ENCODE measurements at regions of chr10 and their contacts with region 1.

Region 1: DNA sequence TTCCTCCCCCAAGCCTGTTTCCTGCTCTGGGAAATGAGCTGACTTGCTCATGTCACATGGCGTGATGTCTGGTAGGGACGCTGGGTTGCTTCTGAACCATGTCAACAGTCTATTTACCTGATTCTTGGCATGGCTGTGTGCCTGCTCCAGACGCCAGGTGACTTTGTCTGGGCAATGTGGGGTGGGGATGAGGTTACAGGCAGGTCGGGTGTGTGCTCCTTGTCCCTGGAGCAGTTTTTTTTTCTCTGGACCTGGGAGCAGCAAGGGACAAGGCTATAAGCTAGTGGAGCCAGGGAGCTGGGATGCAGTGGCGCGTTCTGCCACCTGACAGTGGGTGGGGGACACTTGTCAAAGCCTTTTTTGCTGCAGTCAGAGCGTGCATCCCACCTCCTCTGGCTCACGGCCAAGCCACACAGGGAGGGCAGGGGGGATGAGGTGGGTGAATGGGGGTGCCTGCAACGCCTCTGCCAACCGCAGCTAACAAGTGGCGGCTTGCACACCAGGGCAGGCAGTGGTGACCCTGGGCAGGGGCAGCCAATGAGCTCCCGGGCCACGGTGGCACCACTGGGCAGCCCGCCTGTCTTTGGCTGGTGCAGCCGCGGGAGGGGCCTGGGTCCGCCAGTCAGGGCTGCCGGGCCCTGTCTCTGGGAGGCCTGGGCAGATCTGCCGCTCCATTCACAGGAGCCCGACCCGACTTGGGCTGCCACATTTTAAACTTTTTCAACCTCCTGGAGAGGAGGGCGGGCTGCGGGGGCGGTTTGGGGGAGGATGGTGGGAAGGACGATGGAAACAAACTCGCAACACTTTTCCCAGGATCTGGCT is 22.9 kb downstream of the DNAJB12 start:
- DNase-seq: peak; percentile 98
- H3K4me3 Mint-ChIP-seq: peak overlapping the region; percentile 76
- H3K27ac Mint-ChIP-seq: peak overlapping the region; percentile 100
- H3K4me1 Mint-ChIP-seq: peaks cover 87% of the 10 kb centered on the region
- H3K27me3 Mint-ChIP-seq: peaks cover 2% of the 10 kb centered on the region

Region 2: GRCh38 chr10:70906953-70907636 is 1424.7 kb before region 1 on chr10:
- CTCF ChIA-PET with region 1: no interaction called
- intact Hi-C with region 1: no loop called
- DNase-seq: no peak
- H3K4me3 Mint-ChIP-seq: no peak overlapping the region
- H3K27ac Mint-ChIP-seq: no peak overlapping the region
- H3K4me1 Mint-ChIP-seq: no peaks in the 10 kb centered on the region
- H3K27me3 Mint-ChIP-seq: no peaks in the 10 kb centered on the region

Region 3: DNA sequence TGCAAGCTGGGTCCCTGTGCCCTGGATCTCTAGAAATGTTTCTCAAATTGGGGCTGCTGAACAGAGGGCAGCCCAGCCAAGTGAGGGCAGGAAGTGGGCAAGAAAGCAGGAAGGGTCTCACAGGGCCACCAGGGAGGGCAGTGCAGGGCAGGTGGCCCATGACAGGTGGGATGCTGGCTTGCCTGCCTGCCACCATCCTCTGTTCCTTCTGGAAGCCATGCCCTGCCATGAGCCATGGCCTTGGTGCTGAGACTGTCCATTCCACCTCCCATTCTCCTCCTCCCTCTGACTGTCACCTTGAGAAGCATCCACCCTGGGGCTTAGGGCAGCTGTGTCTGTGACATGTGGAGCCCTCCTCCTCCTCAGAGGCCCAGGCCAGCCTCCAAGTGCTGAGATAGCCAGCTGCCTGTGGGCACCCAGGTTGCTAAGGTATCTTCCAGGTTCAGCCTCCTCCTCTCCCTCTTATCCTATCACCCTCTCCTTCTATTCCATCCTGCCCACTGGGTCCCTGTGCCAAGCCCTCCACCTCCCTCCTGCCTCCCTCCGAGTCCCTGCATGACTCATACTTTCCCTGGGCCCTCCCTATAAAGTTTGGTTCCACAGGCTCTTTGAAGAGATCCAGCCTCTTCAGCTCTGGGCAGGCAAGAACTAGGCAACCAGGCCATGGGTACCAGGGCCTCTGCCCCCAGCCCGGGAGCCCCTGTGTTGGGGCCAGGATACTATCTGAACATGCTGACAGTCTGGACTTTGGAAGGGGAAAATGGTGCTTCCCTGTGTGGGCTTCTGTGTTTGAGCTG is 559.8 kb before region 1 on chr10:
- CTCF ChIA-PET with region 1: no interaction called
- intact Hi-C with region 1: loop called (anchors 5 kb)
- DNase-seq: peak; percentile 76
- H3K4me3 Mint-ChIP-seq: peak overlapping the region; percentile 88
- H3K27ac Mint-ChIP-seq: peak overlapping the region; percentile 98
- H3K4me1 Mint-ChIP-seq: peaks cover 73% of the 10 kb centered on the region
- H3K27me3 Mint-ChIP-seq: no peaks in the 10 kb centered on the region

Region 4: DNA sequence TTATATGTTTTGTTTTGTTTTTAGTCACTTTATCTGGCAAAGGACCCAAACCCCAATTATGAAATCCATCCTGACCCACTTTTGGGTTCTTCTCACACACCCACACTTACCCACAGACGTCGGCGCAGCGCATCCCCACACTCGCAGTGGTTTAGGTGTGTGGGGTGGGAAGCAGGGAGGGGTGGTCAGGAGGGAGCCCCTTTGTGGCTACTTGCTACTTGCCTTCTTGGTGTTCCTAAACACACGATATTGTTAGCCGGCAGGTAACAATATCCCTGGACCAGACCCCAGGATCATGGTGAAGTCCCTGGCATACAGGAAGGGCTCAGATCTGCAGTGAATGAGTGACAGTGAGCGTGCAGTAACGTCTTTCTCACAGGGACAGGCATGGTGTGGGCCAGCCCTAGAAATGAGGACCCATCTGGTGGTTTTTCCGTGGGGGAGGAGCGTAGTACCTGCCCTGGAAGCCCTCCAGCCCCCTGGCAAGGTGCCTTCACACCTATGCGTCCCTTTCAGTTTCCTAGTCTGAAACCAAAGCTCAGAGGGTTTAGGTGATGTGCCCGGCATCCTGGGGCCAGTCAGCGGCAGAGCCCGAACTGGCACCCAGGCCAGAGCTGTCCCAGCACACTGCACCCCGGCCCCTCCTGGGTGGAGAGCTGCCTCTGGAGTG is 247.9 kb before region 1 on chr10:
- CTCF ChIA-PET with region 1: interaction called, 6 read pairs
- intact Hi-C with region 1: loop called (anchors 1 kb)
- DNase-seq: peak; percentile 88
- H3K4me3 Mint-ChIP-seq: peak overlapping the region; percentile 87
- H3K27ac Mint-ChIP-seq: peak overlapping the region; percentile 92
- H3K4me1 Mint-ChIP-seq: peaks cover 76% of the 10 kb centered on the region
- H3K27me3 Mint-ChIP-seq: no peaks in the 10 kb centered on the region

Region 5: DNA sequence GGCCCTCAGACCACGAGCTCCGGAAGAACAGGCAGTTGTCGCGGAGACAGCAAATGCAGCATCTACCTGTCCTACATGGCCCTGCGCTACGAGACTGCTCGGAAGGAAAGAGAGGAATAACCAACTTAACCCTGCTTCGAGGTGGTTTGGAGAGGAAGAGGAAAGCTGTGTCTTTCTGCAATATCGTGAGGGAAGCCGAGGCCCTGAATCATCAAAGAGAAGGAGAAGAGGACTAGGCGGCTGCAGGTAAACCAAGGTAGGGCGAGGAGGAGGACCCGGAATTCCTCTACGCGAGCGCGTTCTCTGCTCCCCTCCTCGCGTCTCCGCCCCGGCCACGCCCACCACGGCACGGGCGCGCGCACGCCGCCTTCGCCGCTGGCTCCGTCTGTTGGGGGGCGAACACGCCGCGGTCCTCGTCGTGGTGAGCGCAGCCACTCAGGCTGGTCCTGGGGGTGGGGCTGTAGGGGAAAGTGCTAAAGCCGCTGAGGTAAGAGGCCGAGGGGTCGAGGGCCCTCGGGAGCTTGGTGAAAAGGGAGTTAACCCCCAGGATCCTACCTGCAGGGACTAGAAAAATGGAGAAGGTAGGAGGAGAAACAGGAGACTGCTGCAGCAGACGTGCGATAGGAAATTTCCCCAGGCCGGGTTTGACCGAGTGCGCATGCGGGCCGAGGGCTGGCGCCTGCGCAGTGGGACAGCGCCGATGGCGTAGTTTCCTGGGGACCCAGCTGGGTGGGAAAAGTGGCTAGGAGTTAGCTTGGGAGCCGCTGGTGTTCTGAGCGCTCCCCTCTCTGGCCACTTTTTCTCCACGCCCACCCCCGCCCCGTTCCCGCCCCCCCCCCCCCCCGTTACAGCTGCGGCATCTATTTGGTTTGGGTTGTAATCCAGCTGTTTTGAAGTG is 115.9 kb before region 1 on chr10 and contains the starts of genes ANAPC16 and ASCC1:
- CTCF ChIA-PET with region 1: interaction called, 10 read pairs
- intact Hi-C with region 1: loop called (anchors 1 kb)
- DNase-seq: peak; percentile 93
- H3K4me3 Mint-ChIP-seq: peak within 1 kb of the TSS; percentile 91
- H3K27ac Mint-ChIP-seq: peak within 1 kb of the TSS; percentile 98
- H3K4me1 Mint-ChIP-seq: peaks cover 67% of the 10 kb centered on the region
- H3K27me3 Mint-ChIP-seq: no peaks in the 10 kb centered on the region
- total RNA-seq, gene ANAPC16: 127 to 128 TPM
- total RNA-seq, gene ASCC1: 61.6 to 68.5 TPM

Region 6: DNA sequence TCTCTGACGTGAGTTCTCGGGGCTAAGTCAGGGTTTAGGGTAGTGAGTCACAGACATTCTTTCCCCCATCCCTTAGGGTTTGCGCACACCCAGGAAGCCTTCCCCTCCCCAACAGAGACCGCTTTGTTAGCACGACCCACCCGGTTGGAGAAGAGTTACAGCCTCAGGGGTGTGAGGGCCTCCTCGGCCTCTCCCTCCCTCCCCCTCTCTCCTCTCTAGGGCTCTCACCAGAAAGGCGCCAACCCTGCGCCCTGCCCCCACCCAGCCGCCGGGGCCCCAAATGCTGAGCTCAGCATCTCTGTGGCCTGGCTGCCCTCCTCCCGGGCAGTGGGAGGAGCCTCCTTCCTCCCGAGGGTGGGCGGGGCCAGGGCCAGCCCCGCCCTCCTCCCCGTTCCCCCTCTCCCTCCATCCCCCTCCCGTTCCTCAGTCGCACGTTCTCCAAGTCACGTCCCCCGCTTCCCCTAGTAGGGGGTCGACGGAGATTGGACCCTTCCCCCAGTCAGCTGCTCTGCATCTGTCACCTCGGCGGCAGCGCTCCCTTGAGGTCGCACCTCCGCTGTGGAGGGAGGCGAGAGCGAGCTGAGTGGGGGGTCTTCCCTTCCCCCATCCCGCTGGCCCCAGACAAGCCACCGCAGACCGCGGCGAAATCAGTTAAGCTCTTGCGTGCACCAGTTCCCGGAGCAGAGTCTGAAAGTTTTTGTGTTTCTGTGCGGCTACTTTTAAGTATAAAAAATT is 71.1 kb before region 1 on chr10:
- CTCF ChIA-PET with region 1: interaction called, 7 read pairs
- intact Hi-C with region 1: loop called (anchors 1 kb)
- DNase-seq: peak; percentile 94
- H3K4me3 Mint-ChIP-seq: peak overlapping the region; percentile 81
- H3K27ac Mint-ChIP-seq: peak overlapping the region; percentile 99
- H3K4me1 Mint-ChIP-seq: peaks cover 65% of the 10 kb centered on the region
- H3K27me3 Mint-ChIP-seq: no peaks in the 10 kb centered on the region

Region 7: GRCh38 chr10:72297968-72298773 is 33.6 kb before region 1 on chr10:
- CTCF ChIA-PET with region 1: interaction called, 37 read pairs
- intact Hi-C with region 1: loop called (anchors 1 kb)
- DNase-seq: peak; percentile 98
- H3K4me3 Mint-ChIP-seq: peak overlapping the region; percentile 89
- H3K27ac Mint-ChIP-seq: peak overlapping the region; percentile 100
- H3K4me1 Mint-ChIP-seq: peaks cover 62% of the 10 kb centered on the region
- H3K27me3 Mint-ChIP-seq: no peaks in the 10 kb centered on the region

Measured in activated naive CD4-positive, alpha-beta T cell treated with anti-CD3 and anti-CD28 coated beads for 36 hours (primary cell).